GM18951 (cell line): ENCODE measurements at regions of chr10 and their contacts with region 1.

Region 1: DNA sequence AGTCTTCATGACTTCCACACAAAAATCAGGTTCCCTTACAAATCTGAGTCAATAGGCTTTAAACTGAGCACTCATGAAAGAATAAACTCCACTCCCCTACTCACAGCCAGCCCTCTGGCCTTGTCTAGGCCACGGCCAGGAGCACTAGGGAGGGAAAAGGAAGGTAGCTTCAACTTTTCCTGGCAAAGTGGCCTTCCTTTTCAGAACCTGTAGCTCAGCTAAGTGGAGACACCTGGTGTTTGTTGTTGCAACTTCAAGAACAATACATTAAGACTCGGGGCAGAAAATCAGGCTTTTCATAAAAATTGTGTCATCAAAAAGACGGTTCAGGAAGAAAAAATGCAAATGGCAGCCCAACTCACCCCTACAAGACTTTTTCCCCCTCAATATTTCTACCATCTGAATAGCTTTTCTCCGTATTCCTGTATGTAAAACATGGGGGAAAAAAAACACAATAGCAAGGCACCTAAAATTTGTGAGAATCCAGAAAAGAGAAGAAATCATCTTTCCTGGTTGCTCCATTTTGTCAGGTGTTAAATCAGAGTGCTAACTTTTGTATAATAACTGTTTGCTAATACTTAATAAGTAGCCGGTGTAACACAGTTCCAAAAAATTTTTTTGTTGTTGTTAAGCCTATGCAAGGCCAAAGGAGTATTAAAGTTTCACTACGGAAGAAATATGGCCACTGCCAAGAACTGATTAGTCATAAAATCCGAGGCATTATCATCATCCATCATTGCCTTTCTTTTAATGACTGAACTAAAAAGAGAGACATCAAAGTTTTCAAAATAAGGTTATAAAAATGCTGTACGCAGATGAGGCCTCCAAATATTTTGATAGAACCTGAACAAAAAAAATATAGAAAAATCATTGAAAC is 66.2 kb upstream of the ARID5B start:
- POLR2A ChIP-seq: no peak

Region 2: DNA sequence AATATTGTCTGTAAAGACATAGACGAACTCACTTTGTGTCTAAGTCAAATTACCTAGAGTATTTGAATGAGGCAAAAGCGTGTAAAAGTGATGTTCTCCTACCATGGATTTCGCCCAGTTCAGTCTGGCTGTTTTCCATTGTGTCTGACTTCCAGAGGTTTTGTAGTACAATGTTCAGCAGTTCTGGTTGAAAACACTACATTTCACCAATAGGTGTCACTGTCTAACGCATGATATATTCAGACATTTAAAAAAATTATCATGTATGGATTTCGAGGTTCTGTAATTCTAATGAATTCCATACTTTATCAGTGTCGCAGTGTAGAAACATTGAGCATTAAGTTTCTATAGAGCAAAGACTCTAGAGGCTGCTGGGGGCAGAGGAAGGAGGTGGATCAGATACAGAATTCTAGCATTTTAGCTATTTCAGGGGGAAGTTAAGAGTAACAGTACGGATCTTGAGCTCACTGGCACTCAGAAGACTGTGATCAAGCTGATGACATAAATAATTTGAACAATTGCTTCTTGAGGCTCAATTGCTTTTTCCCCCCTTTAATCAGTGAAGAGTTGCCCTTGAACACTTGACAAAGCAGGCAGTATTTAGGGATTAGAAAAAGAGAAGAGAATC is 694.4 kb before region 1 on chr10:
- in situ Hi-C with region 1: loop called (anchors 25 kb)
- POLR2A ChIP-seq: no peak

Region 3: DNA sequence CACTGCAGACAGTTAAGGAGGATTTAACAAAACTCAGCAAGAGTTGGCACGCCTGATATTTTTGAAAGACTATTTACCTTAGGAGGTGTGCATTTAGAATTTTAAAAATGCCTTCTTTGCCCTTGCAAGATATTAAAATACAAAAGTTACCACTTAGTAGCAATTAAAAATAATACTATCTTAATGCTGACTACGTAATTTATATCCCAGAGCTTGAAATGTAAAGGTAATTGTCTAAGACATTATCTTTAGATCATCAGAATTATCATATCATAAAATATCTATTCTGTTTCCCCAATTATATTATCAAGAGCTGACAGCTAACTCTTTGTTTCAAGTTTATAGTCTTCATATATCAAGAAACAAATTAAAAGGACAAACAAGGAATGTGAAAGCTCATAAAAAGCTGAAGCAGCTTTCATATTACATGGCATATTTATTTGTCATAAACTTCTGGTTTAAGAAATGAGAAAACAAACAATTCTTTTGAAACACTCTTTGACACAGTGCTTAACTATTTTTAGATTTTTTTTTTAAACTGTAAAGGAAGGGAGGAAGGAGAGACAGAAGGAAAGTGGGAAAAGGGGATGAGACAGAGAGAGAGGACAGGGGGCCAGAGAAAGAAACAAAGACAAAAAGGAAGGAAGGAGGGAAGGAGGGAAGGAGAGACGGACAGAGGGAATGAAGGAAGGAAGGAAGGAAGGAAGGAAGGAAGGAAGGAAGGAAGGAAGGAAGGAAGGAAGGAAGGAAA is 359.8 kb after region 1 on chr10:
- in situ Hi-C with region 1: no loop called
- POLR2A ChIP-seq: no peak

Region 4: GRCh38 chr10:62231371-62231770 is 396.1 kb after region 1 on chr10:
- in situ Hi-C with region 1: no loop called
- POLR2A ChIP-seq: no peak